ENCODE measurements at regions of chr19 and their contacts with region 1.

Region 1: GRCh38 chr19:43503501-43504425 is 783 bp downstream of the PHLDB3 start:
- DNase-seq: peak; percentile 91
- ATAC-seq: peak; percentile 92
- H3K4me3 ChIP-seq: peak overlapping the region; percentile 84
- H3K27ac ChIP-seq: no peak overlapping the region
- H3K4me1 ChIP-seq: 0 out of 2 replicates have a peak, but pooled peaks cover 9% of the 10 kb centered on the region
- H3K27me3 ChIP-seq: no peaks in the 10 kb centered on the region
- CTCF ChIP-seq: no peak; the same call in 1 of the 2 replicates

Region 2: DNA sequence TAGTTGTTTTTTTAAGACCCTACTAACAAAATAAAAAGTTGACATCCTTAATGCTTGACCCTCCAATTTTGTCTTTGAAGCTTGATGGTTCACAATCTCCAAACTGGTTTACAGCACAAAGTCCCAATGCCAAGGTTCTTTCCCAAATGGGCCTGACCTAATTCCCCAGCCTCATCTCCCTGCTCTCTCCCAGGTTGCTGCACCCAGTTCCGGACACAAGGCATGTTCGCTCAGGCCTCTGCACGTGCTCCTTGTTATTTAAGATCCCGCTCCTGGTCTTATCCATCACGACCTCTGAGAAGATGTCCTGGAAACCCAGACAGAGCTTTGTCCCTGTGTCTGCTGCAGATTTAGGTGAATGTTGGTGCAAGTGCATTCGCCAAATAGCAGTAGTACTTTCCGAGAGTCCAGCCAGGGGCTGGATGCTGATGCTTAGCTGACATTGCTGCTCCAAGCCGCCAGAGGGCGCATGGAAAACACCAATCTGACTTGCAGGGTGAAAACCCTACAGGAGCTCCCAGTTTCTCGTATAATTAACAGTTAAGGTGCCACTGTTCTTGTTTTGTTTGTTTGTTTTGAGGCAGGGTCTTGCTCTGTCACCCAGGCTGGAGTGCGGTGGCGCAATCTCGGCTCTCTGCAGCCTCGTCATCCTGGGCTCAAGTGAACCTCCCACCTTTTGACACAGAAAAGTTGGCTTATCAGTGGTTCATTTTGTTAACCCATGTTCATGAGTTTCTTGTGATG is 56.8 kb before region 1 on chr19:
- CTCF ChIA-PET with region 1: interaction called, 14 read pairs
- POLR2A ChIA-PET with region 1: no interaction called
- intact Hi-C with region 1: loop called (anchors 5 kb)
- DNase-seq: peak; percentile 75
- ATAC-seq: peak; percentile 81
- H3K4me3 ChIP-seq: no peak overlapping the region
- H3K27ac ChIP-seq: no peak overlapping the region
- H3K4me1 ChIP-seq: no peaks in the 10 kb centered on the region; the same call in 1 of the 2 replicates
- H3K27me3 ChIP-seq: no peaks in the 10 kb centered on the region
- CTCF ChIP-seq: peak; percentile 88

Measured in PC-3 (cell line).